Activated T-helper 1 cell treated with anti-CD3 and anti-CD28 coated beads, Interleukin-12 subunit alpha, Interleukin-12 subunit beta, Interleukin-2, Interleukin-4 antibody, amounts not matched to agents 30 ng/mL and 10 ng/mL and 1 ng/mL, durations not matched to agents 14 hours and 24 hours and 36 hours (primary cell): ENCODE measurements at regions of chr6 and their contacts with region 1.

Region 1: DNA sequence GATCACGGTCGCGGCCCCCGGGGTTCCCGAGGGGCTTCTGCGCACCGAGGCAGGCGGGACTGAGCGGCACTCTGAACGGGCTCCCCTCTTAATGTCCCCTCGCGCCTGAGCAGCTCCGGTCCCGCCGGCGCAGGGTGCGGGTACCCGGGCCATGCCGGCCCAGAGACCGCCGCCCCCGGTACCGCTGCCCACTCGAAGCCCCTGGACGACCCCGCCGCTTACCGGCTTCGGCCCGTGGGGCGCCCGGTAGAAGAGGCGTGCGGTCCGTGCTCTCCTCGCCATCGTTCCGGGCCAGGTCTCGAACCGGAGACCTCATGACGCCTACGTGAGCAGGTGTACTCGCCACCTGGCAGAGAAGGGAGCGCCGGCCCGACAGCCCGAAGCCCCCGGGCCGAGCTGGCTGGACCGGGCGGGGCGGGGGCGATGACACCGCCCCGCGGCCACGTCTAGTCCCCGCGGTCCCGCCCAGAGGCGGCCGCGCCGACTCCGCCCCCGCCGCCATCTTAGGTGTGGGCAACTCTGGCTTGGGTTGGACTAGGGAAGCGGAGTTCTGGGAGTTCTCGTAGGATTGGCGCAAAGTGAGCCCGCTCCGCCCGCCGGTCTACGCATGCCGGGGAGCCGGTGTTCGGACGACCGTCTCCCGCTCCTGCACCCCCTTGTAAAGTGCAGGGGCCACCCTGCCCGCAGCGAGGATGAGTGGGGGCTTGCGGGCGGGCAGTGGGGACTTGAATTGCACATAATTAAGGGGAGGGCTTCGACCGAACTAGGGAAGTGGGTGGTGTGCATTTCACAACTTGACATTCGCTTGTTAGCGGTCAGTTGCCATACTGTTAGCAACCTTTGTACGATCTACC is at the start of gene SLC17A5:
- DNase-seq: peak; percentile 84
- H3K4me3 Mint-ChIP-seq: peak within 1 kb of the TSS; percentile 95
- H3K27ac Mint-ChIP-seq: peak within 1 kb of the TSS; percentile 95
- H3K4me1 Mint-ChIP-seq: peaks cover 25% of the 10 kb centered on the region
- H3K27me3 Mint-ChIP-seq: no peaks in the 10 kb centered on the region
- total RNA-seq, gene SLC17A5: 4.5 and 5.1 TPM in 2 replicates

Region 2: GRCh38 chr6:73074175-73074574 is 579.6 kb before region 1 on chr6:
- intact Hi-C with region 1: no loop called
- DNase-seq: no peak
- H3K4me3 Mint-ChIP-seq: no peak overlapping the region
- H3K27ac Mint-ChIP-seq: no peak overlapping the region
- H3K4me1 Mint-ChIP-seq: no peaks in the 10 kb centered on the region
- H3K27me3 Mint-ChIP-seq: no peaks in the 10 kb centered on the region

Region 3: GRCh38 chr6:73262671-73263569 is 390.9 kb before region 1 on chr6 and contains the start of gene KHDC1:
- intact Hi-C with region 1: loop called (anchors 2 kb)
- DNase-seq: peak; percentile 57
- H3K4me3 Mint-ChIP-seq: peak within 1 kb of the TSS; percentile 84
- H3K27ac Mint-ChIP-seq: peak within 1 kb of the TSS; percentile 75
- H3K4me1 Mint-ChIP-seq: peaks cover 38% of the 10 kb centered on the region
- H3K27me3 Mint-ChIP-seq: no peaks in the 10 kb centered on the region
- total RNA-seq, gene KHDC1: 4.8 and 6.4 TPM in 2 replicates

Region 4: DNA sequence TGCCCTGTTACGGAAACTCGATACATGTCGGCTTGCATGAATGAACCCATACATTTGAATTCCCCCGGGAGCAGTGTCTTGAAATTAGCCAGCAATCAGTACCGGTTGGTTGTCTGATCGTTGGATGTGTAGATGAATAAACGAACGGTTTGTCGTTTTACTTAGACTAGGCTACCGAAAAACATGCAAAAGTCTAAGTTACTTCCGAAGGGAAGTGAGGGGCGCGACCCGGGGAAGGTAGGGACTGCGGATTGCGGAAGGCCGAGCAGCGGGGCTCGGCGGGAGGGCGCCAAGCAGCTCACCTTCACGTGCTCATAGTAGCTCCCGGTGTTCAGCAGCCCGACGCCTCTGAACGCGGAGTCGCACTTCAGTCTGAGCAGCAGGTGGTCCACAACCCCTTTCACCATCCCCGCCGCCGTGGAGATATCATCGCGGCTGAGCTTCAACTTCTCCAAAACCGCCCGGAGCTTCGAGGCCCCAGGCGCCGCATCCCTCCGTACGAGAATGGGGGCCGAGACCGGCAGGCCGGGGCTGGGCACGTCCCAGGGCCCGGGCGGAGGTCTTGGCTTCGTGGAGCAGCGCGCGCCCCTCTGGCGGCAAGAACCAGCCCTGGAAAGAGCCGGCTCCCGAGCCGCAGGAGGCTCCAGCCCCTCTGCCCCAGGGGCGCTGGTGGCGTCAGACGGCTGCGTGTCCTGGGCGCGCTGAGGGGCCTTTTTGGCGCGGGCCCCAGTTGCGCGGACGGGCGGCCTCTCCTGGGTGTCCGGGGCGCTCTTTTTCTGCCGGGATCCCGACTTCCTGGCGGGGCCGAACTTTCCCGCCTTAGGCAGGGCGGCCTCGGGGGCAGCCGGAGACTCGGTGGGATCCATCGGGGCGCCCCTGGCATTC is 202.3 kb before region 1 on chr6:
- intact Hi-C with region 1: loop called (anchors 2 kb)
- DNase-seq: peak; percentile 22
- H3K4me3 Mint-ChIP-seq: peak overlapping the region; percentile 97
- H3K27ac Mint-ChIP-seq: peak overlapping the region; percentile 87
- H3K4me1 Mint-ChIP-seq: peaks cover 35% of the 10 kb centered on the region
- H3K27me3 Mint-ChIP-seq: no peaks in the 10 kb centered on the region

Region 5: DNA sequence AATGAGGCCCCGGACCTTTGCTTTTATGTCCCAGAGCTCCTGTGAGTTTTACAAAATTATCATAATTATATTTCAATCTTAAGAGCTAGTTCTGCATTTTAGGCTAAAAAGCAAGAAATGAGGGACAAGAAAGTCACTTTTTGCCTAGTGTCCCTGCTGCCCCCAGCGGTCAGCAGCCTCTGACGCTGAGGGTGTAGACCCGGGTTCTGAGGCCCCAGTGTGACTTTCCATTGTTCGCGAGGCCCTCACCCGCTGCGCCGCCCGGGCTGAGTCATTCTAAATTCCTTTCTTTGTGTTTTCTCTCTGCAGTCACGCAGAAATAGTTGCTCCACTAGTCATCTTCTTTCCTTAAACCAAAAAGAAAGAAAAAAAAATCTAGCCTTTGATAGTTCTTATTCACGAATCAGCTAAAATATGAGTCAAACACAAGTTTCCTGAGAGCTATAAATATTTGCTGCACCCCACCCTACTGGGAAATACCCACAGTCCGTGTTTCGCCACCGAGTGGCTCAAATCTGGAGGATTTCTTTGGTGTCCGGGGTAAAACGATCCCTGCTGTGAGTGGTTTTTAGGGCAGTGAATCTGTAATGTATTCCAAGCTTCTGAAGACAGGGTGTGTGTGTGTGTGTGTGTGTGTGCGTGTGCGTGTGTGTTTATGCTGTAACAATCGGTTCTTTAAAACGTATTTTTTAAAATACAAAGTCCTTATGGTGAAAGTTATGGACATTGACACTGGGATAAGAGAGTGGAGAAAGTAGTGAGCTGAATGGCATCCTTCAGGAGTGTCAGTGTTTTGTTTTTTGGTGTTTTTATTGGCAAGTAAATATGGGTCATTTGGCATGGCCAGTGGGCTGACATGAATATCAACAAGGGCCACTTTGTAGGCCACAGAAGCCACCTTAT is 73.3 kb before region 1 on chr6:
- intact Hi-C with region 1: loop called (anchors 1 kb)
- DNase-seq: peak; percentile 47
- H3K4me3 Mint-ChIP-seq: peak overlapping the region; percentile 69
- H3K27ac Mint-ChIP-seq: peak overlapping the region; percentile 95
- H3K4me1 Mint-ChIP-seq: peaks cover 27% of the 10 kb centered on the region
- H3K27me3 Mint-ChIP-seq: no peaks in the 10 kb centered on the region

Region 6: GRCh38 chr6:73640179-73640750 is 13.5 kb before region 1 on chr6:
- intact Hi-C with region 1: no loop called
- DNase-seq: no peak
- H3K4me3 Mint-ChIP-seq: no peak overlapping the region
- H3K27ac Mint-ChIP-seq: no peak overlapping the region
- H3K4me1 Mint-ChIP-seq: peaks cover 5% of the 10 kb centered on the region
- H3K27me3 Mint-ChIP-seq: no peaks in the 10 kb centered on the region

Region 7: DNA sequence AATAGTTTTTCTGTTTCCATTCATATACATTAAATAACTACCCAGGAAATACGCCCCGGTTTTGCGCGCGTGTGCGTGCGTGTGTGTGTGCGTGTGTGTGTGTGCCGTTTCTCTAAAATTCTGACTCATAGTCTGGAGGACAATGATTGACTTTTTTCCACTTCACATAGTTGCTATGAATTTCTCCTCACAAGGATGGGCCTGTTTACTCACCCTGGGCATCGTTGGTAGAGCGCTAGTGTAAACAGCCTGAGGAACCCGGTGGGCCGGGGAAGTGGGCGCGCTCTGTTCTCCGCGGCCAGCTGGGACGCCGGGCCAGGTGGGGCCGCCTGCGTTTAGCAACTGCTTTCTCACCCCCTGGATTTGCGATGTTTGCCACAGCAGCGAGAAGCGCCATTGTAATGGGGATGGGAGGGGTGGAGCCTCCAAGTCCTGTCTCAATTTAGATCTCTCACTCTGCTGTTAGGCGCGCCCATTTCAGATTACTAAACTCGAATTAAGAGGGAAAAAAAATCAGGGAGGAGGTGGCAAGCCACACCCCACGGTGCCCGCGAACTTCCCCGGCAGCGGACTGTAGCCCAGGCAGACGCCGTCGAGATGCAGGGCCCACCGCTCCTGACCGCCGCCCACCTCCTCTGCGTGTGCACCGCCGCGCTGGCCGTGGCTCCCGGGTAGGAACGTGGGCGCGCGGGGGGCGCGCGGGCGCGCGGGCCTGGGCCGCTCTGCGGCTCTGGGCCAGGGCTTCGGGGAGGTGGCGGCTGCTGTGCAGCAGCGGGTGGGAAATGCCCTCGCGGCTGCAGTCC is 42.0 kb after region 1 on chr6 and contains the start of gene CD109:
- intact Hi-C with region 1: loop called (anchors 1 kb)
- DNase-seq: peak; percentile 61
- H3K4me3 Mint-ChIP-seq: peak within 1 kb of the TSS; percentile 88
- H3K27ac Mint-ChIP-seq: peak within 1 kb of the TSS; percentile 95
- H3K4me1 Mint-ChIP-seq: peaks cover 62% of the 10 kb centered on the region
- H3K27me3 Mint-ChIP-seq: peaks cover 4% of the 10 kb centered on the region
- total RNA-seq, gene CD109: 27.1 and 29.3 TPM in 2 replicates

Region 8: GRCh38 chr6:75284632-75285286 is 1631.0 kb after region 1 on chr6 and contains the start of gene TMEM30A:
- intact Hi-C with region 1: loop called (anchors 1 kb)
- DNase-seq: peak; percentile 97
- H3K4me3 Mint-ChIP-seq: no peak within 1 kb of the TSS
- H3K27ac Mint-ChIP-seq: no peak within 1 kb of the TSS
- H3K4me1 Mint-ChIP-seq: peaks cover 40% of the 10 kb centered on the region
- H3K27me3 Mint-ChIP-seq: no peaks in the 10 kb centered on the region
- total RNA-seq, gene TMEM30A: 66.6 and 67.2 TPM in 2 replicates